HepG2 (cell line): ENCODE measurements at regions of chr2 and their contacts with region 1.

Region 1: GRCh38 chr2:80042635-80043034 is 261.9 kb downstream of the LRRTM1 start:
- DNase-seq: no peak
- ATAC-seq: no peak
- H3K4me3 ChIP-seq: no peak overlapping the region
- H3K27ac ChIP-seq: no peak overlapping the region
- H3K4me1 ChIP-seq: no peaks in the 10 kb centered on the region
- H3K27me3 ChIP-seq: no peaks in the 10 kb centered on the region
- CTCF ChIP-seq: no peak
- EP300 ChIP-seq: no peak
- POLR2A ChIP-seq: no peak
- RAD21 ChIP-seq: no peak

Region 2: DNA sequence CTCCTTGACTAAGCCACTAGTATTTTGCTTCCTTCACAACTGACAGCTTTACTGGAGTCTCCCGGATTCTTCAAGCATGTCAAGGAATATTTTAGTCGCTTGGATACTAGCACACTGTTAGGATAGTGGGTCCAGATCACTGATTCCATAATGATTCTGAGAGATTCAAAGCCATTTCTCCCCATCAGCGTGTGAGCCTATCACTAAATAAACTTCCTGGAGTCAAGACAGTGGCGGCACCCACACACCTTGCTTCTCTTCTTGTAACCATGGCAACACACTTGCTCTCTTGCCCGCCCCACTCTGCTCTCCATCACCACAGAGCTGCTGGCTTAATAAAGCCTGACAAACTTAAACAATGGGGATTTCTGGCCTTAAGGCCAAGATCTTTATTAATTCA is 16.8 kb after region 1 on chr2:
- CTCF ChIA-PET with region 1: no interaction called
- POLR2A ChIA-PET with region 1: no interaction called
- in situ Hi-C with region 1: no loop called
- intact Hi-C with region 1: no loop called
- DNase-seq: no peak
- ATAC-seq: no peak
- H3K4me3 ChIP-seq: no peak overlapping the region
- H3K27ac ChIP-seq: no peak overlapping the region
- H3K4me1 ChIP-seq: no peaks in the 10 kb centered on the region
- H3K27me3 ChIP-seq: no peaks in the 10 kb centered on the region
- CTCF ChIP-seq: no peak
- EP300 ChIP-seq: no peak
- POLR2A ChIP-seq: no peak
- RAD21 ChIP-seq: no peak

Region 3: GRCh38 chr2:81389203-81389602 is 1346.6 kb after region 1 on chr2:
- CTCF ChIA-PET with region 1: no interaction called
- POLR2A ChIA-PET with region 1: no interaction called
- in situ Hi-C with region 1: no loop called
- intact Hi-C with region 1: loop called (anchors 5 kb)
- DNase-seq: no peak
- ATAC-seq: no peak
- H3K4me3 ChIP-seq: no peak overlapping the region
- H3K27ac ChIP-seq: no peak overlapping the region
- H3K4me1 ChIP-seq: no peaks in the 10 kb centered on the region
- H3K27me3 ChIP-seq: no peaks in the 10 kb centered on the region
- CTCF ChIP-seq: no peak
- EP300 ChIP-seq: no peak
- POLR2A ChIP-seq: no peak
- RAD21 ChIP-seq: no peak